ENCODE measurements at regions of chr1 and their contacts with region 1.

Region 1: GRCh38 chr1:30754684-30755171 is 2.8 kb downstream of the LAPTM5 start:
- DNase-seq: no peak
- ATAC-seq: no peak
- H3K4me3 ChIP-seq: no peak overlapping the region
- H3K27ac ChIP-seq: no peak overlapping the region
- H3K4me1 ChIP-seq: peaks cover 6% of the 10 kb centered on the region
- H3K27me3 ChIP-seq: peaks cover 9% of the 10 kb centered on the region
- CTCF ChIP-seq: no peak
- POLR2A ChIP-seq: no peak
- RAD21 ChIP-seq: no peak

Region 2: DNA sequence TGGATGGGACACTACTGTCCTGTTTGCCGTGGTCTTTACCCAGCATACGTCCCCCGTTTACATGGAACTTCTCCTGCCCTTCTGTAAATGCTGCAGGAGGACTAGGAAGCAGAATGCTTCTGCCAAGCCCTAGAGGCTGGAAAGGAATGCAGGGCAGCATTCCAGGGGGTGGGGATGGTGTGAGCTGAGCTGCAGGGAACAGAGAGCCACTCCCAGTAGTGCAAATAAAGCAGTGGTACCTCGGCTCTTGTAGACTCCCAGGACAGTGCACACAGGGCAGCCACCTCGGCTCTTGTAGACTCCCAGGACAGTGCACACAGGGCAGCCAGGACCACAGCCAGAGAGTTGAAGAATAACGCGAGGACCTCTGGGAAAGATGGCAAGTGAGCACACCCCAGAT is 1483.0 kb before region 1 on chr1:
- CTCF ChIA-PET with region 1: no interaction called
- POLR2A ChIA-PET with region 1: no interaction called
- dilution Hi-C with region 1: no loop called
- in situ Hi-C with region 1: no loop called
- intact Hi-C with region 1: no loop called
- DNase-seq: peak; percentile 65
- ATAC-seq: peak; percentile 98
- H3K4me3 ChIP-seq: no peak overlapping the region
- H3K27ac ChIP-seq: peak overlapping the region; percentile 10; the same call in 1 of the 2 replicates
- H3K4me1 ChIP-seq: peaks cover 10% of the 10 kb centered on the region; the same call in 1 of the 2 replicates
- H3K27me3 ChIP-seq: no peaks in the 10 kb centered on the region
- CTCF ChIP-seq: no peak
- POLR2A ChIP-seq: no peak
- RAD21 ChIP-seq: no peak

Region 3: GRCh38 chr1:30770150-30770549 is 15.4 kb after region 1 on chr1:
- CTCF ChIA-PET with region 1: interaction called, 3 read pairs
- POLR2A ChIA-PET with region 1: interaction called, 4 read pairs
- dilution Hi-C with region 1: no loop called
- in situ Hi-C with region 1: no loop called
- intact Hi-C with region 1: loop called (anchors 1 kb)
- DNase-seq: no peak
- ATAC-seq: no peak
- H3K4me3 ChIP-seq: no peak overlapping the region
- H3K27ac ChIP-seq: no peak overlapping the region
- H3K4me1 ChIP-seq: no peaks in the 10 kb centered on the region
- H3K27me3 ChIP-seq: peaks cover 18% of the 10 kb centered on the region
- CTCF ChIP-seq: no peak
- POLR2A ChIP-seq: no peak
- RAD21 ChIP-seq: no peak

Region 4: GRCh38 chr1:30840904-30841598 is 86.3 kb after region 1 on chr1:
- CTCF ChIA-PET with region 1: no interaction called
- POLR2A ChIA-PET with region 1: no interaction called
- dilution Hi-C with region 1: no loop called
- in situ Hi-C with region 1: no loop called
- intact Hi-C with region 1: no loop called
- DNase-seq: peak; percentile 17
- ATAC-seq: no peak
- H3K4me3 ChIP-seq: no peak overlapping the region
- H3K27ac ChIP-seq: no peak overlapping the region
- H3K4me1 ChIP-seq: peaks cover 2% of the 10 kb centered on the region; the same call in 1 of the 2 replicates
- H3K27me3 ChIP-seq: peaks cover 44% of the 10 kb centered on the region
- CTCF ChIP-seq: no peak
- POLR2A ChIP-seq: no peak
- RAD21 ChIP-seq: no peak

Region 5: GRCh38 chr1:30911046-30911954 is 156.6 kb after region 1 on chr1:
- CTCF ChIA-PET with region 1: no interaction called
- POLR2A ChIA-PET with region 1: no interaction called
- dilution Hi-C with region 1: no loop called
- in situ Hi-C with region 1: no loop called
- intact Hi-C with region 1: no loop called
- DNase-seq: peak; percentile 78
- ATAC-seq: peak; percentile 70
- H3K4me3 ChIP-seq: no peak overlapping the region
- H3K27ac ChIP-seq: no peak overlapping the region
- H3K4me1 ChIP-seq: peaks cover 20% of the 10 kb centered on the region
- H3K27me3 ChIP-seq: no peaks in the 10 kb centered on the region
- CTCF ChIP-seq: peak; percentile 96
- POLR2A ChIP-seq: peak; percentile 62; the same call in 1 of the 2 replicates
- RAD21 ChIP-seq: peak; percentile 99

Measured in IMR-90 (cell line).